ENCODE measurements at regions of chr10 and their contacts with region 1.

Region 1: GRCh38 chr10:58177362-58177947 is 90.2 kb downstream of the IPMK start:
- DNase-seq: no peak
- H3K4me3 Mint-ChIP-seq: no peak overlapping the region
- H3K27ac Mint-ChIP-seq: no peak overlapping the region
- H3K4me1 Mint-ChIP-seq: no peaks in the 10 kb centered on the region
- H3K27me3 Mint-ChIP-seq: peaks cover 4% of the 10 kb centered on the region

Region 2: GRCh38 chr10:57430376-57430775 is 747.1 kb before region 1 on chr10:
- CTCF ChIA-PET with region 1: no interaction called
- intact Hi-C with region 1: no loop called
- DNase-seq: no peak
- H3K4me3 Mint-ChIP-seq: no peak overlapping the region
- H3K27ac Mint-ChIP-seq: no peak overlapping the region
- H3K4me1 Mint-ChIP-seq: no peaks in the 10 kb centered on the region
- H3K27me3 Mint-ChIP-seq: no peaks in the 10 kb centered on the region

Region 3: DNA sequence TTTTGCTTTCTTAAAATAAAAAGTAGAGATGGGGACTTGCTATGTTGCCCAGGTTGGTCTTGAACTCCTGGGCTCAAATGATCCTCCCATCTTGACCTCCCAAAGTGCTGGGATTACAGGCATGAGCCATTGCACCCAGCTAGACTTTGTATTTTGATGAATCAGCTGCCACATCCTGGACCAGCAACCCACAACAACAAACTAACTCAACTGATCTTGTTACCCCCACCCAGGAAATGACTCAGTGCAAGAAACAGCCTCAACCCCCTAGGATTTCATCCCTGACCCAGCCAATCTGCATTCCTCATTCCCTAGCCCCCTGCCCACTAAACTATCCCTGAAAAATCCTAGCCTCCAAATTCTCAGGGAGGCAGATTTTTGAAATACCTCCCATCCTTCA is 33.5 kb before region 1 on chr10:
- CTCF ChIA-PET with region 1: no interaction called
- intact Hi-C with region 1: no loop called
- DNase-seq: no peak
- H3K4me3 Mint-ChIP-seq: no peak overlapping the region
- H3K27ac Mint-ChIP-seq: no peak overlapping the region
- H3K4me1 Mint-ChIP-seq: no peaks in the 10 kb centered on the region
- H3K27me3 Mint-ChIP-seq: peaks cover 10% of the 10 kb centered on the region

Region 4: GRCh38 chr10:58201704-58202103 is 24.2 kb after region 1 on chr10:
- CTCF ChIA-PET with region 1: interaction called, 10 read pairs
- intact Hi-C with region 1: no loop called
- DNase-seq: no peak
- H3K4me3 Mint-ChIP-seq: no peak overlapping the region
- H3K27ac Mint-ChIP-seq: no peak overlapping the region
- H3K4me1 Mint-ChIP-seq: no peaks in the 10 kb centered on the region
- H3K27me3 Mint-ChIP-seq: no peaks in the 10 kb centered on the region

Region 5: DNA sequence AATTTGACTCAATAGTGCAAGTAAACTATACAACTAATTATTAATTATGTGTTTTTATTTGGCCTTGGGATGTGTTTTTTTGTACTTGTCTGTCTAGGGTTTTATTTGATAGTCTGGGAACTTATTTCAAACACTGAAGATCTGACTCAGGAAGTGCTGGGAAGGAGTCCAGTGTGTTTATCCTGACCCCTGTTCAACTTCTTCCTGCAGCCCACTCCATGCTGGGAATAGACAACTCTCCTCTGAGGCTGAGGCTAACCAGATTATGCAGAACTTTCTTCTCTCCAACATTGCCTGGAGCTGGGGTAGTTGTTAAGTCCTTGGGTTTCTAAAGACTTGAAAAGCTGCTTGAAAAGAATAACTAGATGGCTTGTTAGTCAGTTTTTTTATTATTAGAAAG is 98.5 kb after region 1 on chr10:
- CTCF ChIA-PET with region 1: interaction called, 12 read pairs
- intact Hi-C with region 1: no loop called
- DNase-seq: no peak
- H3K4me3 Mint-ChIP-seq: no peak overlapping the region
- H3K27ac Mint-ChIP-seq: no peak overlapping the region
- H3K4me1 Mint-ChIP-seq: peaks cover 44% of the 10 kb centered on the region
- H3K27me3 Mint-ChIP-seq: no peaks in the 10 kb centered on the region

Region 6: DNA sequence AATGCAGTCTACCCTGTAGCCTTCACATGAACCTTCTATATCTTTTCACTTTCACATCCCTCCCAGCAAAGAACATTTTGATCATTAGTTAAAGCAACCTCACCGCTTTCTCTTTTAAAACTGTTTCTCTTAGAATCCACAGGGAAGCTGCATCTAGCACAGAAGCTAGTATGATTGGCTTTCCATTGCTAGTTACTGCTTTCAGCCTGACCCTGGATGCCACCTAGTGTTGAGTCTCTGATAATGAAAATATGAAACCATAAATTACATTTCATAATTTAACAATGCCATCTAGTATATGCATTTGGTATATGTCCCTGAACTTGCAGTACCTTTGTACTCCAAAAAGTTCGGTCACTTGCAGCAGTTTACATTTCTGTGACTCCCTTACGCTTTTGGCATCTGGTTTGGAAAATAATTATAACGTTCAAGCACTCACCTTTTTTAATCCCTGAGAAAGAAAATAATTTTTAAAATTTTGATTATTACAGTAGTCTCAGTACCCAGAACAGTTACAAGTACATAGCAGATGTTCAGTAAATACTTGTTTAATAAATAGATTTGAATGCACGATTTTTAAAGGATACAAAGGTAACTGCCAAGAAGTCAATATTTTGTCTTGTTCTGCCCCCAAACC is 114.2 kb after region 1 on chr10:
- CTCF ChIA-PET with region 1: interaction called, 177 read pairs
- intact Hi-C with region 1: loop called (anchors 1 kb)
- DNase-seq: peak; percentile 55
- H3K4me3 Mint-ChIP-seq: no peak overlapping the region
- H3K27ac Mint-ChIP-seq: no peak overlapping the region
- H3K4me1 Mint-ChIP-seq: peaks cover 4% of the 10 kb centered on the region
- H3K27me3 Mint-ChIP-seq: no peaks in the 10 kb centered on the region

Region 7: GRCh38 chr10:58299580-58299979 is 122.1 kb after region 1 on chr10:
- CTCF ChIA-PET with region 1: interaction called, 177 read pairs
- intact Hi-C with region 1: no loop called
- DNase-seq: peak; percentile 78
- H3K4me3 Mint-ChIP-seq: no peak overlapping the region
- H3K27ac Mint-ChIP-seq: no peak overlapping the region
- H3K4me1 Mint-ChIP-seq: no peaks in the 10 kb centered on the region
- H3K27me3 Mint-ChIP-seq: peaks cover 5% of the 10 kb centered on the region

Region 8: DNA sequence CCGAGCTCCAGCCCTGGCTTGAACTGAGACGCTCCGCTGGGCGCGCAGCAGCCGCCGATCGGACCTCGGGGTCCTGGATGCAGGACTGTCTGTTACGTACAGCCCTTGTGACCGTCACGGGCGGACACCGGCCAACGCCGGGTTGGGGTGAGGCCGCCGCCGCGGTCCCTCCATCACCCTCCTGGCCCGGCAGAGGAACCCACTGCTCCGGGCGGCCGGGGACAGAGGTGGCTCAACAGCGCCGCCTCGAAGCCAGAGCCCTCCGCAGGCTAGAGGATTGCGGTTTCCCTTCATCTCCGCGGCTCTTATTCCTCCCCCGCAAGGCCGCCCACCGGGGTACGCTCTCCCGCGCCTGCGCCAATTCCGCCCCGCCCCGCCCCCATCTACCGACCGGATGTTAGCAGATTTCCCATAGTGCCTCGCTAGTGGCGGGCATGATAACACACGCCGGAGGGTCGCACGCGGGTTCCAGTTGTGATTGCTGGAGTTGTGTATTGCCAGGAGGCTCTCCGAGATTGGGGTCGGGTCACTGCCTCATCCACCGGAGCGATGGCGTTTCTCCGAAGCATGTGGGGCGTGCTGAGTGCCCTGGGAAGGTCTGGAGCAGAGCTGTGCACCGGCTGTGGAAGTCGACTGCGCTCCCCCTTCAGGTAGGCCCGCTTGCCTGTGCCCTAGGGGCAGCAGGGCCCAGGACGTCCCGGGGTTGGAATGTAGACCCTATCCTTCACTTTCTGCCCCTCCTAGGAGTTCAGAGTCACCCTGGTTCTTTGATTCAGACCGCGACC is 207.7 kb after region 1 on chr10 and contains the start of gene TFAM:
- CTCF ChIA-PET with region 1: interaction called, 6 read pairs
- intact Hi-C with region 1: loop called (anchors 1 kb)
- DNase-seq: peak; percentile 98
- H3K4me3 Mint-ChIP-seq: peak within 1 kb of the TSS; percentile 100
- H3K27ac Mint-ChIP-seq: peak within 1 kb of the TSS; percentile 97
- H3K4me1 Mint-ChIP-seq: peaks cover 36% of the 10 kb centered on the region
- H3K27me3 Mint-ChIP-seq: no peaks in the 10 kb centered on the region
- total RNA-seq, gene TFAM: 87.7 to 91.8 TPM

Region 9: DNA sequence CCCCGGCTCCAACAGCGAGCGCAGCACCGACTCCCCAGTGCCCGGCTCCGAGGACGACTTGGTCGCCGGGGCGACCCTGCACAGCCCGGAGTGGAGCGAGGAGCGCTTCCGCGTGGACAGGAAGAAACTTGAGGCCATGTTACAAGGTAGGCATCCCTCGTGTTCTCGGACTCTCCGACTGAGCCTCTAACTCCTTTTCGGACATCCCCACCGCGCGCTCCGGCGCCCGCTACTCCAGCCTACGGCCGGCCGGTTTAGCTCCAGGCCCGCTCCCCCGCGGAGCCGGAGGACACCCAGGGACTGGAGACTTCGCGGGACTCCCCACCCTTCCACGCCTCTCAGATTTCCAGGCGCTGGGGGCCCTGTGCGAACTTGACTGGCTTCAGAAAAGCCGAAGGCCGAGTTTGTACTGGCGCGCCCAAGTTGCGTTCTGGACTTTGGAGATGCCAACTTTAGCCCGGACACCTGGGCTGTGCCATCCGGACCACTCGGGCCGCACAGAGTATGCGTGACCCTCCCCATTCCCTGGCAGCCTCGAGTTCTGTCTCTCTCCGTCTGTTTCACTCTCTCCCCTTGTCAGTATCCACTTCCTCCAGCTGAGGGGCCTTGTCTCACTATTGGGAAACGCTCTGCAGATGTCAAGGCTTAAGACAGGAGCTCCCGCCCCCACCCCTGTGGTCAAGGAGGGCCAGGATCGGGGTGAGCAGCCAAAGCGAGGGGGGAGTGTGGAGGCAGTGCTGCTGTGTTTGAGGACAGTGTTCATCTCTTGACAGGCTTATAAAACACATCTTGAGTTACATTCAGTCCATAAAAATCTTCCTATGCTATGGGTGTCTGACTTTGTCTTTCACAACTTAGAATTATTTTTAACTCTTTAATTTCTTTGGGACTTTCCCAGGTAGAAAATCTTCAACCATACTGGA is 336.0 kb after region 1 on chr10:
- CTCF ChIA-PET with region 1: no interaction called
- intact Hi-C with region 1: loop called (anchors 10 kb)
- DNase-seq: no peak
- H3K4me3 Mint-ChIP-seq: peak overlapping the region; percentile 55
- H3K27ac Mint-ChIP-seq: no peak overlapping the region
- H3K4me1 Mint-ChIP-seq: peaks cover 8% of the 10 kb centered on the region
- H3K27me3 Mint-ChIP-seq: peaks cover 38% of the 10 kb centered on the region

Measured in activated naive CD4-positive, alpha-beta T cell treated with anti-CD3 and anti-CD28 coated beads for 36 hours (primary cell).